Activated T-helper 1 cell treated with anti-CD3 and anti-CD28 coated beads, Interleukin-12 subunit alpha, Interleukin-12 subunit beta, Interleukin-2, Interleukin-4 antibody, amounts not matched to agents 30 ng/mL and 10 ng/mL and 1 ng/mL, durations not matched to agents 14 hours and 24 hours and 36 hours (primary cell): ENCODE measurements at regions of chr13 and their contacts with region 1.

Region 1: DNA sequence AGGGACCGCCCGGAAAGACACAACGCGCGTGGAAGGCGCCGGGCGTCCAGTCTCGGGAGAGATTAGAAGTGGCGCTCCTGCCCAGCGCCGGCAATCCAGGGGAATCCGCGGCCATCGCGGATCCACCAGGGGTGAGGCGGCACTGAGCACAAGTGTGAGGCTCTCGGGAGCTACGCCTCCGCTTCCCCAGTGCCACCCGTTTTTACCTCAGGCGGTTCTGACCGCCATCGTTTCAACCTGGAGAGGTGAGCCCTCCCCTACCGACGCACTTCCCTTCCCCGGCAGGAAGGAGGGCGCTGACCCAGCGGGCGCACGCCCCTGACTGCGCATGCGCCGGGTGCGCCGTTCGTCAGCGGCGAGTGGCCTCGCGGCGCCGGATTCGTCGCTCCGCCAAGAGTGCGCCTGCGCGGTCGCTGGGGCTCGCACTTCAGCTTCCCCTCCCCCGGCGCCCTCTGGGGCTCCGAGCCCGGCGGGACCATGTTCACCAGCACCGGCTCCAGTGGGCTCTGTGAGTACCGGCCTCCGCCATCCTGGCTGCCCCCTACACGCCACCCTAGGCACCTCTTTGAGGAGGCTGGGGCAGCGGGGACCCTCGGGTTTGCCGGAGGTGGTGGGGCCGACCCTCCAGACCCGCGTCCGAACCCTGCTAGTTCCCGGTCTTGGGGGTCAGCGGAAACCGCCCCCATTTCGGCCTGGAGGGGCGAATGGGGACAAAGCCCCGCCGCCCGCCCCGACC is at the start of gene UBAC2:
- DNase-seq: peak; percentile 97
- H3K4me3 Mint-ChIP-seq: peak within 1 kb of the TSS; percentile 98
- H3K27ac Mint-ChIP-seq: peak within 1 kb of the TSS; percentile 96
- H3K4me1 Mint-ChIP-seq: peaks cover 65% of the 10 kb centered on the region
- H3K27me3 Mint-ChIP-seq: no peaks in the 10 kb centered on the region
- total RNA-seq, gene UBAC2: 52.1 and 56.3 TPM in 2 replicates

Region 2: DNA sequence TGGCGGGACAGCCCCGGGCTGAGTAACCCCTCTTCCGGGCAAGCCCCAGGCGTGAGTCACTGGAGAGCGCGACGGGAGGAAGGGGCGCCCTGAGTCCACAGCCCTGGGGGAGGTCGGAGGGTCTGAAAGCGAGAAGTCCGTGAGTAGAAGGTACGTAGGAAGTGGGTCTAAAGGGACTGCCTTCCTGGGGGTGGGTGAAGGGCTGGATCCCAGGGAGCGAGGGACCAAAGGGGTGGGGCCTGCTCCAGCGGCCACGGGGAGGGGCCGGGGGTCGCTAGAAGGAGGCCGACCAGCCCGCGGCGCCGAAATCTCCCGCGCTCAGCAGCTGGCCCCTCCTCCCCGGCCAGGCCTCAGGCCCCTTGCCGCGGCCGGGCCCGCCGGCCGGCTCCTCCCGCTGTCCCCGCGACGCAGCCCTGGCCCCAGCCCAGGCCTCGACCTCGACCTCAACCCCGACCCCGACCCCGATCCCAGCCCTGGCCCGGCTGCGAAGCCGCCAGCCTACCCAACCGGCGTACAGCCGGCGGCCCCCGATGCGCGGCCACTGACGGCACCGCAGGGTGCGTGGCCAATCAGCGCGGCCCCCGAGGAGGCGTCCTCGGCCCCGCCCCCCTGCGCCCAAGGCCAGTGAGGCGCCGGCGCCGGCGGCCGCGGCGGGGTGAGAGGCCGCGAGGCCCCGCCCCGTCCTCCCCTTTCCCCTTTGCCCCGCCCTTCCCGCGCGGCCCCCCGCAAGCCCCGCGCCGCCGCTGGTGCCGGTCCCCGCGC is 1224.6 kb before region 1 on chr13:
- intact Hi-C with region 1: loop called (anchors 5 kb)
- DNase-seq: peak; percentile 88
- H3K4me3 Mint-ChIP-seq: peak overlapping the region; percentile 93
- H3K27ac Mint-ChIP-seq: peak overlapping the region; percentile 98
- H3K4me1 Mint-ChIP-seq: peaks cover 33% of the 10 kb centered on the region
- H3K27me3 Mint-ChIP-seq: peaks cover 13% of the 10 kb centered on the region

Region 3: GRCh38 chr13:98910501-98910951 is 290.1 kb before region 1 on chr13:
- intact Hi-C with region 1: loop called (anchors 1 kb)
- DNase-seq: peak; percentile 49
- H3K4me3 Mint-ChIP-seq: peak overlapping the region; percentile 35
- H3K27ac Mint-ChIP-seq: peak overlapping the region; percentile 97
- H3K4me1 Mint-ChIP-seq: peaks cover 56% of the 10 kb centered on the region
- H3K27me3 Mint-ChIP-seq: no peaks in the 10 kb centered on the region

Region 4: DNA sequence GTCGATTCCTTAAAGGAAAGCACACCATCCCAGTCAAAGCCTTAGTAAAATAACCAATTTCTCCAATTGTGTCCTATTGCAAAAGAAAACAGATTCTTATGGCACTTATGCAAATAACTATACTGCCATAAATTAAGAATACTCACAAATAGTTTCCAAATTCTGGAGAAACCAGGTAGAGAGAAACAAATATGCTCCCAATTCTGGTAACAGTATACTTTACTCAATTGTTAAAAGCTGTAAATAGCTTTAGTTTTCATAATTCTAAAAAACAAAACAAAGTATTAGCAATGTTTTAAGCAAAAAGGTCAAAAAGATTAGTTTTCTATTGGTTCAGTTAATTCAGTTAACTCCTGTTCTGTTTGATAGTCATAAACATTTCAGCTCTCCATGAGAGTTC is 18.2 kb before region 1 on chr13:
- intact Hi-C with region 1: no loop called
- DNase-seq: no peak
- H3K4me3 Mint-ChIP-seq: no peak overlapping the region
- H3K27ac Mint-ChIP-seq: no peak overlapping the region
- H3K4me1 Mint-ChIP-seq: peaks cover 15% of the 10 kb centered on the region
- H3K27me3 Mint-ChIP-seq: peaks cover 13% of the 10 kb centered on the region

Region 5: DNA sequence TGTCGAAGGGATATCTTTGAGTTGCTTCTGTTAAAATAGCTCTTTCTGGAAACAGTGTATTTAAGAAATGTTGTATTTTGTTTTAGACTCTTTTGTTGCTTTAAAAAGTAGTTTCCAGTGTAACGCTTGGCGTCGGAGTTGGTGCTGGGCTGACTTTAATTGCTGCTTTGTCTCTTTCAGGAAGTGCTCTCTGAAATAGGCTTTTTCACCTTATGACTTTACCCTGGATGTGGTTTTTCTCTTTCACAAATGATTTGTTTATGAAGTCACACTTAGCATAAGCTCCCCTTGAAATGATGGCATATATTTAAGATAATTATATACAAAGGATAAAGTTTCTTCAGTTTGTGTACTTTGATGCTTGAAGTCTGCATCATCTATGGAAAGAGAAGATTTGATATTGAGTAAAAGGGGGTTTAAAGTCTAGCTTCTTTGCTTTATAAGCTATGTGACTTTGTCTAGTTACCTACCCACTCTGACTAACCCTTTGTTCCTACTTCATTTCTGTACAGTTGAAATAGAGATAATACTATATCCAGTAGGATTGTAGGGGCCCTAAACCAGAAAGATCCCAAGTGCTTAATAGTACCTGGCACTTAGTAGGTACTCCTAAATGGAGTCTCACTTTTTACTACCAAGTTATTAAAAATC is 57.7 kb after region 1 on chr13 and contains the start of gene GPR18:
- intact Hi-C with region 1: loop called (anchors 1 kb)
- DNase-seq: no peak
- H3K4me3 Mint-ChIP-seq: peak within 1 kb of the TSS; percentile 88
- H3K27ac Mint-ChIP-seq: peak within 1 kb of the TSS; percentile 89
- H3K4me1 Mint-ChIP-seq: peaks cover 66% of the 10 kb centered on the region
- H3K27me3 Mint-ChIP-seq: no peaks in the 10 kb centered on the region
- total RNA-seq, gene GPR18: 12.0 and 15.9 TPM in 2 replicates

Region 6: GRCh38 chr13:99314640-99315176 is 114.1 kb after region 1 on chr13:
- intact Hi-C with region 1: loop called (anchors 2 kb)
- DNase-seq: peak; percentile 54
- H3K4me3 Mint-ChIP-seq: peak overlapping the region; percentile 57
- H3K27ac Mint-ChIP-seq: peak overlapping the region; percentile 96
- H3K4me1 Mint-ChIP-seq: peaks cover 80% of the 10 kb centered on the region
- H3K27me3 Mint-ChIP-seq: no peaks in the 10 kb centered on the region

Region 7: GRCh38 chr13:99501184-99501847 is 300.7 kb after region 1 on chr13 and contains the start of gene TM9SF2:
- intact Hi-C with region 1: loop called (anchors 1 kb)
- DNase-seq: peak; percentile 95
- H3K4me3 Mint-ChIP-seq: peak within 1 kb of the TSS; percentile 96
- H3K27ac Mint-ChIP-seq: peak within 1 kb of the TSS; percentile 95
- H3K4me1 Mint-ChIP-seq: peaks cover 70% of the 10 kb centered on the region
- H3K27me3 Mint-ChIP-seq: peaks cover 1% of the 10 kb centered on the region
- total RNA-seq, gene TM9SF2: 59.1 and 62.6 TPM in 2 replicates